GM12878 (cell line): ENCODE measurements at regions of chr12 and their contacts with region 1.

Region 1: DNA sequence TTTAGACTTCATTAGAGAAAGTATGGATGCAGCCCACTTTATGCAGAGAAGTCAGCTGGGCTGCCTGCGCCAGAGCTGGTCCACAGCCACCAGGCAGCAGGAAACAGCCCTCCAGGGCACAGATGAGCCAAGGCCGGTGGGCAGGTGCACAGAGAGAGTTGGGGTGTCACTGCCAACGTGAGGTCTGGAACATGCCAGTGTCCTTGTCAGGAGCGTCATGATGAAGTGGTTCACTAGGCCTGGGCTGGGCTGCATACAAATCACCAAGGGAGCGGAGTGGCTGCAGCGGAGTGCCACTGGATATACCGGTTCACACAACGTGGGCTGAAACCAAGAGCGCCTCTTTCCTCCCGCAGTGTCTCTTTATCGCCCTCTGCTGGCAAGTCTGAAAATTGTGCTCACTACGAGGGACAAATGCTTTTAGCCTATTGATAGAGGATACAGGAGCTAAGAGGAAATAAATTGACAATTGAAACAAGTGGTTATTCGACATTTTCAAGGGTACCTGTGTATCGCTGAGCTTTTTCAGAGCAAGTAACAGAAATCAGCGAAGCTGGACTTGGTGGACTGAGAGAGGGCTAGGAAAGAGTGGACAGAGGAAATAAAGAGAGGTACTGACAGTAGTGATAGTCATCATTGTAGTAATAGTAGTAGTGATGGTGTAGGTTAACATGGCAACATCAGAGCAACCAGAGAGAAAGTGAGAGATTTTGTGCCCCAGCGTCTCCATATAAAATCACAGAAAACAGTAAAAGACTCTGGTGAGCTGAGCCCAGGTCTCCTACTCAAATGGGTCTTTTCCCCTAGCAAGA is 52.0 kb upstream of the ITPR2 start:
- DNase-seq: peak; percentile 65
- ATAC-seq: peak; percentile 98
- H3K4me3 ChIP-seq: no peak overlapping the region
- H3K27ac ChIP-seq: no peak overlapping the region
- H3K4me1 ChIP-seq: peaks cover 4% of the 10 kb centered on the region; the same call in 1 of the 2 replicates
- H3K27me3 ChIP-seq: no peaks in the 10 kb centered on the region
- CTCF ChIP-seq: peak; percentile 95 to 98 (median 98)
- EP300 ChIP-seq: no peak
- POLR2A ChIP-seq: no peak
- RAD21 ChIP-seq: peak; percentile 96

Region 2: GRCh38 chr12:26691234-26691970 is 193.6 kb before region 1 on chr12:
- CTCF ChIA-PET with region 1: no interaction called
- POLR2A ChIA-PET with region 1: no interaction called
- RAD21 ChIA-PET with region 1: no interaction called
- SMC1A ChIA-PET with region 1: no interaction called
- in situ Hi-C with region 1: no loop called
- intact Hi-C with region 1: no loop called
- DNase-seq: no peak
- ATAC-seq: no peak
- H3K4me3 ChIP-seq: no peak overlapping the region
- H3K27ac ChIP-seq: no peak overlapping the region
- H3K4me1 ChIP-seq: no peaks in the 10 kb centered on the region
- H3K27me3 ChIP-seq: no peaks in the 10 kb centered on the region
- CTCF ChIP-seq: no peak
- EP300 ChIP-seq: no peak
- POLR2A ChIP-seq: no peak
- RAD21 ChIP-seq: no peak

Region 3: DNA sequence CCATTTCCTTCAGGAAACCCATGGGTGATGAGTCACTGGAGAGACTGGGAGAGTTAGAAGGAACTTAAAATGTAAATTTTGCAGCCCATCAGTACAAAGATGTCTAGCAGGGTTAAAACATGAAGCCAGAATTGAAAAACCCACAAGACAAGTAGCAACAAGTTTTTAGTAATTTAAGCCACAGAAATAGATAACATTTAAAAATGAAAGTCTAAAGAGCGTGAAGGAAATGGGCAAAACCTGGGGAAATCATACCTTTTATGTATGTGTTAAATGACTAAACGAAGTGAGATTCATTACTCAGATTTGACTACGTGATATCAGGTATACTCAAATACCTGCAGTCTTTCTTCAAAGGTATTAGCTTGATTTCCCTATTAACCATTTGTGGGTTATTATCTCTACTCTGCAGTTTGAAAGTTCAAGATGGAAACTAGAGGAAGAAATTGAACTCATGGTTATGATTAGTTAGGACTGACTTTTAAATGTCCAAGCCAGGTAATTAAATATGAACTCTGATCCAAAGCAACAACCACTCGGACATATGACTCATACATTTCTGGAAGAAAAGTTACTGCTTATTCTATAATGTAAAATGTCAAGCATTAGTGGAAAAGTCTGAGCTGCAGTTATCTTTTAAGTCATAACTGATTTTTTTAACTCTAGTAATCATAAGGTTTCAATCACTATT is 136.1 kb before region 1 on chr12:
- CTCF ChIA-PET with region 1: interaction called, 10 read pairs
- POLR2A ChIA-PET with region 1: no interaction called
- RAD21 ChIA-PET with region 1: interaction called, 3 read pairs
- SMC1A ChIA-PET with region 1: no interaction called
- in situ Hi-C with region 1: no loop called
- intact Hi-C with region 1: no loop called
- DNase-seq: peak; percentile 86
- ATAC-seq: peak; percentile 56
- H3K4me3 ChIP-seq: peak overlapping the region; percentile 32; the same call in 1 of the 2 replicates
- H3K27ac ChIP-seq: peak overlapping the region; percentile 91
- H3K4me1 ChIP-seq: peaks cover 64% of the 10 kb centered on the region
- H3K27me3 ChIP-seq: no peaks in the 10 kb centered on the region
- CTCF ChIP-seq: no peak
- EP300 ChIP-seq: peak; percentile 4 to 80
- POLR2A ChIP-seq: no peak
- RAD21 ChIP-seq: no peak

Region 4: GRCh38 chr12:26783131-26783526 is 101.8 kb before region 1 on chr12:
- CTCF ChIA-PET with region 1: no interaction called
- POLR2A ChIA-PET with region 1: no interaction called
- RAD21 ChIA-PET with region 1: no interaction called
- SMC1A ChIA-PET with region 1: no interaction called
- in situ Hi-C with region 1: no loop called
- intact Hi-C with region 1: no loop called
- DNase-seq: no peak
- ATAC-seq: no peak
- H3K4me3 ChIP-seq: no peak overlapping the region
- H3K27ac ChIP-seq: no peak overlapping the region
- H3K4me1 ChIP-seq: no peaks in the 10 kb centered on the region
- H3K27me3 ChIP-seq: no peaks in the 10 kb centered on the region
- CTCF ChIP-seq: no peak
- EP300 ChIP-seq: no peak
- POLR2A ChIP-seq: no peak
- RAD21 ChIP-seq: no peak

Region 5: GRCh38 chr12:26845057-26845666 is 39.8 kb before region 1 on chr12:
- CTCF ChIA-PET with region 1: interaction called, 158 read pairs
- POLR2A ChIA-PET with region 1: interaction called, 3 read pairs
- RAD21 ChIA-PET with region 1: interaction called, 60 read pairs
- SMC1A ChIA-PET with region 1: interaction called, 30 read pairs
- in situ Hi-C with region 1: no loop called
- intact Hi-C with region 1: no loop called
- DNase-seq: no peak
- ATAC-seq: peak; percentile 43; the same call in 2 of the 3 replicates
- H3K4me3 ChIP-seq: no peak overlapping the region
- H3K27ac ChIP-seq: no peak overlapping the region
- H3K4me1 ChIP-seq: peaks cover 10% of the 10 kb centered on the region
- H3K27me3 ChIP-seq: no peaks in the 10 kb centered on the region
- CTCF ChIP-seq: peak; percentile 38 to 59 (median 56)
- EP300 ChIP-seq: no peak
- POLR2A ChIP-seq: no peak
- RAD21 ChIP-seq: peak; percentile 58

Region 6: DNA sequence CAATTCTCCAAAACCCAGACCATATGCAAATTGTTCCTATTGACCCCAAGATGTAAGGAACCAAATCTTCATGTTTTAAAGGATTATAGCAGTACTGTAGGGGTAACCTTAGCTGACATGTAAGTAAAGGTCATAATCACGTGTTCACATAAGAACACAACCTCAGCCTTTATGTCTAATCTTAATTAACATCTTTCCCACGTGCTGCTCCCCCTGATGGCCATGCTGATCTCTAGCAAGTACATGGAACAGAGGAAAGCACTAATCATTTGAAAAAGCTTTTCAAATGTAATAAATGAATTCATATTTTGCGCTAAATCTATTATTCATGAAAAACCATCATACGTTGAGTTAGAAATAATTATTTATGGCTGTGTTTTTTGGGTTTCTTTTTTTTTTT is 21.5 kb before region 1 on chr12:
- CTCF ChIA-PET with region 1: interaction called, 115 read pairs
- POLR2A ChIA-PET with region 1: interaction called, 13 read pairs
- RAD21 ChIA-PET with region 1: interaction called, 36 read pairs
- SMC1A ChIA-PET with region 1: interaction called, 105 read pairs
- in situ Hi-C with region 1: no loop called
- intact Hi-C with region 1: no loop called
- DNase-seq: no peak
- ATAC-seq: 0 out of 3 replicates have a peak, but pooled peaks have one; percentile 17
- H3K4me3 ChIP-seq: no peak overlapping the region
- H3K27ac ChIP-seq: no peak overlapping the region
- H3K4me1 ChIP-seq: peaks cover 5% of the 10 kb centered on the region; the same call in 1 of the 2 replicates
- H3K27me3 ChIP-seq: no peaks in the 10 kb centered on the region
- CTCF ChIP-seq: 0 out of 6 replicates have a peak, but pooled peaks of 1 of the 3 experiments have one; percentile 24
- EP300 ChIP-seq: no peak
- POLR2A ChIP-seq: no peak
- RAD21 ChIP-seq: no peak

Region 7: GRCh38 chr12:26896913-26897312 is 11.9 kb after region 1 on chr12:
- CTCF ChIA-PET with region 1: interaction called, 27 read pairs
- POLR2A ChIA-PET with region 1: interaction called, 4 read pairs
- RAD21 ChIA-PET with region 1: interaction called, 4 read pairs
- SMC1A ChIA-PET with region 1: interaction called, 11 read pairs
- in situ Hi-C with region 1: no loop called
- intact Hi-C with region 1: no loop called
- DNase-seq: no peak
- ATAC-seq: no peak
- H3K4me3 ChIP-seq: no peak overlapping the region
- H3K27ac ChIP-seq: no peak overlapping the region
- H3K4me1 ChIP-seq: no peaks in the 10 kb centered on the region
- H3K27me3 ChIP-seq: no peaks in the 10 kb centered on the region
- CTCF ChIP-seq: no peak
- EP300 ChIP-seq: no peak
- POLR2A ChIP-seq: no peak
- RAD21 ChIP-seq: no peak

Region 8: GRCh38 chr12:26971963-26972362 is 87.0 kb after region 1 on chr12:
- CTCF ChIA-PET with region 1: interaction called, 6 read pairs
- POLR2A ChIA-PET with region 1: no interaction called
- RAD21 ChIA-PET with region 1: interaction called, 11 read pairs
- SMC1A ChIA-PET with region 1: interaction called, 9 read pairs
- in situ Hi-C with region 1: no loop called
- intact Hi-C with region 1: no loop called
- DNase-seq: peak; percentile 72
- ATAC-seq: peak; percentile 100
- H3K4me3 ChIP-seq: no peak overlapping the region
- H3K27ac ChIP-seq: peak overlapping the region; percentile 35; the same call in 1 of the 2 replicates
- H3K4me1 ChIP-seq: peaks cover 7% of the 10 kb centered on the region
- H3K27me3 ChIP-seq: no peaks in the 10 kb centered on the region
- CTCF ChIP-seq: peak in 1 of 3 experiments; percentile 35; a peak in 2 of 6 replicates
- EP300 ChIP-seq: peak; percentile 37 to 65; a peak in 2 of 4 replicates
- POLR2A ChIP-seq: no peak
- RAD21 ChIP-seq: peak; percentile 43; the same call in 1 of the 2 replicates